Breast epithelium (tissue), 4 donors: ENCODE measurements at regions of chr3 and their contacts with region 1.

Region 1: GRCh38 chr3:923161-923910 is 169.5 kb upstream of the CNTN6 start:
- DNase-seq: no peak
- H3K4me3 ChIP-seq: no peak overlapping the region
- H3K27ac ChIP-seq: no peak overlapping the region
- H3K4me1 ChIP-seq: no peaks in the 10 kb centered on the region
- H3K27me3 ChIP-seq: no peaks in the 10 kb centered on the region
- CTCF ChIP-seq: no peak
- POLR2A ChIP-seq: no peak

Region 2: DNA sequence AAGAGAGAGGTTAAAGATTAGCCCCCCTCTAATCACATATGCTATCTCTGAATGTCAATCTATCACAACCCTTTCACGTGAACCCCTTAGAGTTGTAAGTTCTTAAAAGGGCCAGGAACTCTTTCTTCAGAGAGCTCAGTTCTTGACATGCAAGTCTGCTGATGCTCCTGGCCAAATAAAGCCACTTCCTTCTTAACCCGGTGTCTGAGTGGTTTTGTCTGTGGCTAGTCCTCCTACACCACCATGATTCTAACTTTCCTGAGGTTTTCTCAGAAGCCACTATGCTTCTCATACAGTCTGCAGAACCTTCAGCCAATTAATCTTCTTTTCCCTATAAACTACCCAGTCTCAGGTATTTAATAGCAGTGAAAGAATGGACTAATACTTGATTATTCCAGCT is 61.6 kb before region 1 on chr3:
- intact Hi-C with region 1: loop called (anchors 10 kb)
- DNase-seq: no peak
- H3K4me3 ChIP-seq: no peak overlapping the region
- H3K27ac ChIP-seq: no peak overlapping the region
- H3K4me1 ChIP-seq: no peaks in the 10 kb centered on the region
- H3K27me3 ChIP-seq: no peaks in the 10 kb centered on the region
- CTCF ChIP-seq: no peak
- POLR2A ChIP-seq: no peak